Naive thymus-derived CD4-positive, alpha-beta T cell (primary cell): ENCODE measurements at regions of chr19 and their contacts with region 1.

Region 1: DNA sequence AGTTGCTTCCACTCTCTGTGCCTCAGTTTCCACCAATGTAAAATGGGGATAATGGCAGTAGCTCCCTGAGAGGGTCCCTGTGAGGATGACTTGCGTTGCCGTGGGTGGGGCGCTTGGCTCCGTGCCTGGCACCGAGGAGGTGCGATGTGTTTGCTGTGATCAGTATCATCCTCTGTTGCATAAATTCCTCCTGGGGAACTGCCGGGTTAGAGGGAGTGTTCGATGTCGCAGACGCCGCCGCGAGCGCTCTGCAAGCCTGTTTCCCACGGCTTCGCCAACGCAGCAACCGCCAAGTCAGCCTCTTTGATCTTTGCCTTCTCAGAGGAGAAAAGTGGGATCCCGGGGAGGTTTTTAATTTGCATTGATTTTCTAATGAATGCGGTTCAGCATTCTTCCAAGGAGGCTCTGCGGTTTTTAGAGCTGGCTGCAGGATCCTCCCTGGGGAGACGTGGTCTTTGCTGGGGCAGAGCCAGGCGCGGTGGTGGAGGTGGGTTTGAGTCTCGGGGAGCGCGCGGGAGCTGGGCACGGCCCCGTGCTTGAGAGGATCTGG is 7.6 kb downstream of the GPR32 start:
- DNase-seq: no peak
- ATAC-seq: no peak
- H3K4me3 ChIP-seq: no peak overlapping the region
- H3K4me3 Mint-ChIP-seq: no peak overlapping the region
- H3K27ac ChIP-seq: no peak overlapping the region
- H3K27ac Mint-ChIP-seq: no peak overlapping the region
- H3K4me1 ChIP-seq: no peaks in the 10 kb centered on the region
- H3K4me1 Mint-ChIP-seq: peaks cover 2 to 14% (median 6%) of the 10 kb centered on the region in 7 donors
- H3K27me3 ChIP-seq: peaks cover 0 to 17% of the 10 kb centered on the region in 2 donors
- H3K27me3 Mint-ChIP-seq: peaks cover 55 to 85% (median 79%) of the 10 kb centered on the region in 5 donors

Region 2: DNA sequence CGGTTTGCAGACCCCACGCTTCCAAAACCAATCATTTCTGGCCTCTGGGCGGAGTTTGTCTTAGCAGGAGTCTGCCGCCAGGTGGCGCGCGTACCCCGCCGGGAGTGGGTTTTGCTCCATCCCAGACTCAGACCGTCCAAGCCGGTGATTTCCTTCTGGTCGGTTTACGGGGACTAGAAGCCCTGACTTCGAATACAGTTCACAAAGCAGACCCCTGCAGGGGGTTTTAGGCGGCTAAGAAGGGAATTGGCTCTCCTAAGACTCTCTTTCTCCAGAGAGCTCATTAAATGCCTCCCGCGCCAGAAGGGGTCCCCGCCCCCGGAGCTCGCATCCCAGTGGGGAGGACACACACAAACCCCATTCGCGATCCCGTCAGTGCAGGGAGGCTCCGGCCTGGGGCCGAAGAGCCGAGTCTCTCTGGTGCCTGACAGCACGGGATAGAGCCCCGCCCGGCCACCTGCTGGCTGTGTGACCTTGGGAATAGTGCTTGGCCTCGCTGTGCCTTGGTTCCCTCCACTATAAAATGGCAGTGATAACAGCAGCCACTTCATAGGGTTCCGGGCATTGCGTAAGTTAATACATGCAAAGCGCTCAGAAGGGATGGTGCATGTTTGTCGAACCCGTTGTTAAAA is 840.0 kb before region 1 on chr19:
- CTCF ChIA-PET with region 1: no interaction called
- POLR2A ChIA-PET with region 1: no interaction called
- intact Hi-C with region 1: loop called in 1 of 2 experiments (anchors 5 kb)
- DNase-seq: peak; percentile 40 to 86 (median 66)
- ATAC-seq: peak; percentile 89
- H3K4me3 ChIP-seq: no peak overlapping the region
- H3K4me3 Mint-ChIP-seq: peak overlapping the region in 3 of 10 donors; percentile 17 to 29 (median 21)
- H3K27ac ChIP-seq: no peak overlapping the region
- H3K27ac Mint-ChIP-seq: no peak overlapping the region
- H3K4me1 ChIP-seq: peaks cover 13% of the 10 kb centered on the region in 2 donors
- H3K4me1 Mint-ChIP-seq: peaks cover 14 to 26% (median 19%) of the 10 kb centered on the region in 7 donors
- H3K27me3 ChIP-seq: no peaks in the 10 kb centered on the region
- H3K27me3 Mint-ChIP-seq: peaks cover 0 to 11% (median 0%) of the 10 kb centered on the region in 5 donors

Region 3: GRCh38 chr19:50242581-50242980 is 535.2 kb before region 1 on chr19:
- CTCF ChIA-PET with region 1: no interaction called
- POLR2A ChIA-PET with region 1: no interaction called
- intact Hi-C with region 1: no loop called
- DNase-seq: no peak
- ATAC-seq: no peak
- H3K4me3 ChIP-seq: no peak overlapping the region
- H3K4me3 Mint-ChIP-seq: no peak overlapping the region
- H3K27ac ChIP-seq: no peak overlapping the region
- H3K27ac Mint-ChIP-seq: no peak overlapping the region
- H3K4me1 ChIP-seq: no peaks in the 10 kb centered on the region
- H3K4me1 Mint-ChIP-seq: no peaks in the 10 kb centered on the region
- H3K27me3 ChIP-seq: no peaks in the 10 kb centered on the region
- H3K27me3 Mint-ChIP-seq: peaks cover 0 to 24% (median 20%) of the 10 kb centered on the region in 5 donors

Region 4: DNA sequence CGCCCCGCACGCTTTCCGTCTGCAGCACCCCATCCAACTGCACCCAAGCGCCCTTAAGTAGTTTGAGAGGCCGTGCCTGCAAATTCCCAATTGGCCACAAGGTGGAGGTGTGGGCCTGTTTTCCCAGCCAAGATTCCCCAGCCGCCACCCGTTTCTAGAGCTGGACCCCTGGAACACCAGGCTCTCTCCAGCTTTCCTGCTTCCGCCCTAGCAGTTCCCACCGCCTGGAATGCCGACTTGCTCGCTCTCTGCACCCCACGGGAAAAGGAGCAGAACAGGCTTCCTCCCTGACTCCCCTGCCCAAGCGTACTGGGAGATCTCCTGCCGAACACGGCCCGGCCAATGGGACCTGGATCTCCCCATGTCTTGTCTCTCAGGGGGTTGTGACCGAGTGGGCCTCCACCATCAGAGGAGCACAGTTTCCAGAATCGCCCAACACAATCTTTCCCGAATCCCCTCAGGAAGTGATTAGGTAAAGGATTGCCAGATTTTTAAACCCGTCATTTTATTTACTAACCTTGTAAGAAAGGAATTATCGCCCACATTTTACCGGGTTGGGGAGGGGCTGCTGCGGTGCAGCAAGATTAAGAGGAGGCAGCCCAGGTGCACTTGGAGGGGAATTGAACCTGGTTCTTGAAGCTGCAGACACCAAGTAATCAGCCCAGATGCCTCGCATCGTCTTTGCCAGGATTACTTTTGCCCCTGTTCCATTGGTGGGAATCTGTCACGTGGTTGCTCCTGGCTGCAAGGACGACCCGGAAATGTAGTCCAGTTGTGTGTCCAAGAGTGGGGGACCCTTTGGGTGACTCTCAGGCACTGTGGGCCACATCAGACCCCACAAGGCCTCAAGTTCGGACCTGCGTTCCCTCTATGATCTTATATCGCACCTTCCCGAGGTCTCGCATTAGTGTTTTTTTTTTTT is 408.9 kb before region 1 on chr19:
- CTCF ChIA-PET with region 1: no interaction called
- POLR2A ChIA-PET with region 1: no interaction called
- intact Hi-C with region 1: loop called in 1 of 2 experiments (anchors 1 kb)
- DNase-seq: peak; percentile 56 to 83 (median 74)
- ATAC-seq: peak; percentile 91
- H3K4me3 ChIP-seq: peak overlapping the region; percentile 69
- H3K4me3 Mint-ChIP-seq: peak overlapping the region; percentile 68 to 97 (median 93)
- H3K27ac ChIP-seq: peak overlapping the region; percentile 78
- H3K27ac Mint-ChIP-seq: peak overlapping the region; percentile 60 to 97 (median 91)
- H3K4me1 ChIP-seq: peaks cover under 1 to 4% of the 10 kb centered on the region in 2 donors
- H3K4me1 Mint-ChIP-seq: peaks cover 8 to 45% (median 36%) of the 10 kb centered on the region in 7 donors
- H3K27me3 ChIP-seq: no peaks in the 10 kb centered on the region
- H3K27me3 Mint-ChIP-seq: no peaks in the 10 kb centered on the region

Region 5: GRCh38 chr19:50669302-50670101 is 108.3 kb before region 1 on chr19:
- CTCF ChIA-PET with region 1: interaction called, 3 read pairs
- POLR2A ChIA-PET with region 1: no interaction called
- intact Hi-C with region 1: loop called in 1 of 2 experiments (anchors 2 kb)
- DNase-seq: peak in 4 of 9 donors; percentile 8 to 53 (median 21)
- ATAC-seq: no peak
- H3K4me3 ChIP-seq: no peak overlapping the region
- H3K4me3 Mint-ChIP-seq: peak overlapping the region in 4 of 10 donors; percentile 23 to 68 (median 44)
- H3K27ac ChIP-seq: no peak overlapping the region
- H3K27ac Mint-ChIP-seq: peak overlapping the region in 1 of 9 donors; percentile 38
- H3K4me1 ChIP-seq: no peaks in the 10 kb centered on the region
- H3K4me1 Mint-ChIP-seq: peaks cover 0 to 4% (median 0%) of the 10 kb centered on the region in 7 donors
- H3K27me3 ChIP-seq: no peaks in the 10 kb centered on the region
- H3K27me3 Mint-ChIP-seq: peaks cover 41 to 69% (median 61%) of the 10 kb centered on the region in 5 donors

Region 6: DNA sequence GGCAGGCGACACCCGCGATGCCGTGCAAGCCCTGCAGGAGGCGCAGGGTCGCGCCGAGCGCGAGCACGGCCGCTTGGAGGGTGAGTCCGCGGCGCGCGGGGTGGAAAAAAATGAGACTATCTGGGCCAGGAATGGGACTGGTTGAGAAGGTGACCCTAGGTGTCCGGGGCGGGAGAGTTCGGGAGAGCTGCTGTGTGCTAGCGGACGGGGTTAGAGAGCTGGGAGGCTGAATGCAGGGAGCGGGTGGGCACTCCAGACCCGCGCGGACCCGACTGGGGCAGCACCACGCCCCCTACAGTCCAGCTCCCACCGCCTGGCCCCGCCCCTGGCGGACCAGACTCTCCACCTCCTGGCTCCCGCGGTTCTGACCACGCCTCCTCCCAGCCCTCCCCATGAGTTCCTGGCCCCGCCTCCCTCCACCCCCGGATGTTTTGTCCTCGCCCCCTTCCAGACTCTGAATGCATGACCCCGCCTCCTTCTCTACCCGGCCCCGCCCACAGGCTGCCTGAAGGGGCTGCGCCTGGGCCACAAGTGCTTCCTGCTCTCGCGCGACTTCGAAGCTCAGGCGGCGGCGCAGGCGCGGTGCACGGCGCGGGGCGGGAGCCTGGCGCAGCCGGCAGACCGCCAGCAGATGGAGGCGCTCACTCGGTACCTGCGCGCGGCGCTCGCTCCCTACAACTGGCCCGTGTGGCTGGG is 53.2 kb before region 1 on chr19:
- CTCF ChIA-PET with region 1: no interaction called
- POLR2A ChIA-PET with region 1: no interaction called
- intact Hi-C with region 1: loop called (anchors 1 kb)
- DNase-seq: peak; percentile 74 to 99 (median 94)
- ATAC-seq: peak; percentile 93
- H3K4me3 ChIP-seq: peak overlapping the region; percentile 62
- H3K4me3 Mint-ChIP-seq: peak overlapping the region; percentile 79 to 92 (median 84)
- H3K27ac ChIP-seq: peak overlapping the region; percentile 66
- H3K27ac Mint-ChIP-seq: peak overlapping the region in 8 of 9 donors; percentile 34 to 87 (median 70)
- H3K4me1 ChIP-seq: peaks cover 5 to 12% of the 10 kb centered on the region in 2 donors
- H3K4me1 Mint-ChIP-seq: peaks cover 0 to 34% (median 24%) of the 10 kb centered on the region in 7 donors
- H3K27me3 ChIP-seq: peaks cover 5 to 12% of the 10 kb centered on the region in 2 donors
- H3K27me3 Mint-ChIP-seq: peaks cover 47 to 70% (median 53%) of the 10 kb centered on the region in 5 donors